ENCODE measurements at regions of chr1 and their contacts with region 1.

Region 1: DNA sequence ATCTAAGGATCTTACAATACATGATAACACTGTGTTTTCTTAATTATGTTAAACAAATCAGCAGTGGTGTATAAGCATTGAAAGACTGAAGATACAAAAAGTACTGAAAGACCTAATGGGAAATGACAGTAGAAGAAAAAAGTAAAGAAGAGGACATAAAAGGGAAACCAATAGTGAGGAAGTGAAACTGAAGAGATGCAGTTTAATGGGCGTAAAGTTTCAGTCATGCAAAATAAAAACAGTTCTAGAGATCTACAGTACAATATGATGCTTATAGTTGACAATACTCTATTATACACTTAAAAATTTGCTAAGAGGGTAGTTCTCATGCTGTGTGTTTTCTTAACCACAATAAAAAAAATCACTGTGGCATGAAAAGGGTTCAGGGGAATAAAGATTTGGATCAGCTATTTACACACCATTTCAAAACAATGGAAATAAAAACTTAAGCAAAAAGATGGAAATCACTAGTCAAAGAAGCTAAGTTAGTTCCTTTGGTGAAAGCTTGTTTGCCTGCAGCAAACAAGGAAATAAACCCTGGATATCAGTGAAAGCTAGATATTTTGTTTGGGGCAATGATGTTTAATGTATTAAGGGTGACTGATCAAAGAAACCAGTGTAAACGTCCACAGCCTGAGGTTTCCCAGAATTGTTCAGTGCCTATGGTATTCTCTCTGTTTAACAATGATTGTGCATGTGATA is 1160.8 kb upstream of the ADGRL2 start:
- DNase-seq: no peak
- H3K4me3 ChIP-seq: no peak overlapping the region
- CTCF ChIP-seq: no peak

Region 2: GRCh38 chr1:80582980-80583379 is 56.9 kb before region 1 on chr1:
- in situ Hi-C with region 1: loop called (anchors 5 kb)
- DNase-seq: peak; percentile 18
- H3K4me3 ChIP-seq: no peak overlapping the region
- CTCF ChIP-seq: no peak